Activated T-helper 1 cell treated with anti-CD3 and anti-CD28 coated beads, Interleukin-12 subunit alpha, Interleukin-12 subunit beta, Interleukin-2, Interleukin-4 antibody, amounts not matched to agents 30 ng/mL and 10 ng/mL and 1 ng/mL, durations not matched to agents 14 hours and 24 hours and 36 hours (primary cell): ENCODE measurements at regions of chr3 and their contacts with region 1.

Region 1: DNA sequence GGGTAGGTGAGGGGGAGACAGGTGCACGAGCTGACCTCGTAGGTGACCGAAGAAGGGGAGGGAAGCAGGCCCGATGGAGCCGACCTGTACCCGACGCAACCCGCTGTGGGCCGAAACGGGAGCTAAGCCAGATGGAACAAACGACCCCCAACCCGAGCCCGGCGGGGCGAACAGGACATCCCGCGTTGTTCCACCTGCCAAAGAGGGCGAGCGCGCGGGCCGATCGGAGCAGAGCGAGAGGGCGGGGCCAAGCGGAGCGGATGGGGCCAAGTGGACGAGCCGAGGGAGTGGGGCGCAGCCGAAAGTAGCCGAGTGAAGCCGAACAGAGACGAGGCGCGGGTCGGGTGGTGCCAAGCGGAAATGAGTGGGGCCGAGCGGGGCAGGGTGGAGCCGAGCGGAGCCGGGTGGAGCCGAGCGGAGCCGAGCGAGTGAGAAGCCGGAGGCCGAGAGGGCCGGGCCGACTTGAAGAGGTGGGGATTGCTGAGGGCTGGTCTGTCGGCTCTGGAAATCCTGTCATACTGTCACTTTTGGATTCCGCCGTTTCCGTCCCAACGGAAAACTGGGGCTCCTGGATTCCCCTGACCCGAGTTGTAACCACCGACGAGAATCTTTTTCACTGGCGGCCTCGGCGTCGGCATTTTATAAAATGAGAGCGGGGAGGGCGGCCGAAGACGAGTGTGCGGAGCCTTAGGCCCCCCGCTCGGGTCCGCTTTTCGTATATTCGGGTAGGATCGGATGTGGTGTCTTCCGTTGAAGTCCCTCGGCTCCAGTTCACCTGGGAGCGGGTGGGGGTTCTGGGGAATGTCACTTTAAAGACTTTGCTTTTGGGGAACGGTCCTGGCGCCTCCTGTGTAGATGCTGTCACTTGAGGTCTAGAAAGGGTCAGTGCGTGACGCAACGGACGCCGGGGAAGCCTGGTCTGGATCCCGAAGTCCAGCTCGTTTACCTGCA is 15.6 kb upstream of the WNT7A start:
- DNase-seq: peak; percentile 95
- H3K4me3 Mint-ChIP-seq: peak overlapping the region; percentile 89
- H3K27ac Mint-ChIP-seq: peak overlapping the region; percentile 79
- H3K4me1 Mint-ChIP-seq: peaks cover 22% of the 10 kb centered on the region
- H3K27me3 Mint-ChIP-seq: peaks cover 3% of the 10 kb centered on the region

Region 2: DNA sequence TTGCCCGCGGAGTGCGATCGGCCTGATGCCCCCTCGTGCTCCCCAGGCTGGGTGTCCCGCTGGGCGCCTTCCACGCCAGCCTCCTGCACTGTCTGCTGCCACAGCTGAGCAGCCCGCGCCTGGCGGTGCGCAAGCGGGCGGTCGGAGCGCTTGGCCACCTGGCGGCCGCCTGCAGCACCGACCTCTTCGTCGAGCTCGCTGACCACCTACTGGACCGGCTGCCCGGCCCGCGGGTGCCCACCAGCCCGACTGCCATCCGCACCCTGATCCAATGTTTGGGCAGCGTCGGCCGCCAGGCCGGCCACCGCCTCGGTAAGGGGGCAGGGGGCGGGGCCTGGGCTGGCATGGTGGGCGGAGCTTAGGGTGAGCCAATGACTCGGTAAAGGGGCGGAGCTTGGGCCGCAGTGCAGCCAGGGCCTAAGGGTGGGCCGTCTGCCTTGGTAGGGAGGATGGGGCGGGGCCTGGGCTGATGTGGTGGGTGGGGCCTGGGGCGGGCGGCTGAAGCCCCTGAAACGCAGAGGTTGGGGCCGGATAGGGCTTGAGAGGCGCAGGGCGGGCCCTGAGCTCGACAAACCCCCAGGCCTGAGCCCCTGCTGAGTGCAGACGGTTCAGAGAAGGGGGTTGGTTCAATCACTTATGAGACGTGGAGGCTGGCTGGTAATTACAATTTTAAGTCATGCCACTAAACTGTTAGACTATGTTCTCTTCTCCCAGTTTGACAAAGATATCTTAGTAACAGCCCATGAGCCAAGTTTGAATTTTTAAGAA is 1085.2 kb before region 1 on chr3:
- intact Hi-C with region 1: loop called (anchors 10 kb)
- DNase-seq: peak; percentile 86
- H3K4me3 Mint-ChIP-seq: peak overlapping the region; percentile 26
- H3K27ac Mint-ChIP-seq: no peak overlapping the region
- H3K4me1 Mint-ChIP-seq: peaks cover 5% of the 10 kb centered on the region
- H3K27me3 Mint-ChIP-seq: peaks cover 6% of the 10 kb centered on the region

Region 3: DNA sequence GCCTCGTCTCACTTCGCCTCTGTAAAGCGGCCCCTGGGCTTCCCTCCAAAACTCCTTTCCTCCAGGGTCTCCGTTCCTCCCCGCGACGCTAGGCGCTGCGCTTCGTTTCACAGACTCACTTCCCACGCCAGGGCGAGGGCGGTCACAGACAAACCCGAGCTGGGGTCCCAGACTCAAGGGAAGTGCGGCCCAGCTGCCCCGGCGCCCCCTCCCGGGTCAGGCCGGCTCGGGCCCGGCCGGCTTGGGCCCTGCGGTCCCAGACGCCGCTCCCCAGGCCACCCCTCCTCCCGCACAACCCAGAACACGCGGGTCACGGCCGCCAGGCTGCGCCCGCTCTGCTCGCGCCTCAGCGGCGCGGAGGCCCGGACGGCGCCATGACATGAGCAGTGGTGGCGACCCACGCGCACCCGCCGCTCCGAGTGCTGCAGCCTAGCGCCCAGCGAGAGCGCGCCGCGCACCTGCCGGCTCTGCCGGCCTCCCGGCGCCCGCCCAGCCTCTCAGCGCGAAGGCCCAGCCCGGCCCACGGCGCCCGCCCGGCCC is 475.9 kb before region 1 on chr3:
- intact Hi-C with region 1: loop called (anchors 10 kb)
- DNase-seq: peak; percentile 56
- H3K4me3 Mint-ChIP-seq: peak overlapping the region; percentile 88
- H3K27ac Mint-ChIP-seq: peak overlapping the region; percentile 92
- H3K4me1 Mint-ChIP-seq: peaks cover 71% of the 10 kb centered on the region
- H3K27me3 Mint-ChIP-seq: no peaks in the 10 kb centered on the region

Region 4: DNA sequence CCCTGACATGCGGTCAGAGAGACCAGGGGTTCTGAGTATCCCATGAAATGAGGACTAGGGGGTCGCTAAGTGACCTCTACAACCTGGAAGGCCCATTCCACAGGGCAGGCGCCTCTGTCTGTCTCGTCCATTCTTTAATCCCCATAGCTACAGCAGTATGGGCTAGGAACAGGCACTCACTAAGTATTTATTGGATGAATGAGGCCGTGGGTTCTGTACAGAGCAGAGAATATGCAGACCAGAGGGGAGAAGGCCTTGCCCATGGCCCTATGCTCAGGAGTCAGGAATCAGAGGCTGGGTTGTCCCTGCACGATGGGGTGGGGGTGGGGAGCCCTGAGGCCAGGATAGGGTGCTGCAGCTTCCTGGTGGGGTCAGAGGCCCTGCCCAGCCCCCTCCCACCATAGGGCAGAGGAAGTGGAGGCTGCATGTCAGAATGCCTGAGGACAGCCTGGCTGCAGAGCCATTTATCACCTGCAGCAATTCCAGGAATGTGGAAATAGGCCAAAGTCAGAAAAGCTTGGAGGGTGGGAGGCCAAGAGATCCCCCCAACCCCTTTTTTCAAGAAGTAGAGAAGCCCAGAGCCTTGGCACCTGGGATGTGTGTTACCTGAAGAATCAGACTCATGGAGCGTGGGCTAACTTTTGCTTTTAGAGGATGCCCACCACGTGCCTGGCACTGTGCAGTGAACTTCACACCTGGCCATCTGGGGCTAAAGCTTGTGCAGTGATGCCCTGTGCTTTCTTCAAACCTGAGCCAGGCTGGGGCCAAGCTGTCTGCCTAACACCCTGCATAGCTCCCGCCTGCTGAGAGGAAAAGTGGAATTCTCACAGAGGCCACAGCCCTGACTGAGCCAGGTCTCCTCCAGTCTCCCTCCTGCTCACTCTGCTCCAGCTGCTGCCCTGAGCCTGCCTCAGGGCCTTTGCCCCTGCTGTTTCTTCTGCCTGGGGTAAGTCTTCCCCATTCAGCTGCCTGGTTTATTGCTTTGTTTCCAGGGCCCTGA is 125.0 kb before region 1 on chr3:
- intact Hi-C with region 1: no loop called
- DNase-seq: no peak
- H3K4me3 Mint-ChIP-seq: no peak overlapping the region
- H3K27ac Mint-ChIP-seq: no peak overlapping the region
- H3K4me1 Mint-ChIP-seq: peaks cover 6% of the 10 kb centered on the region
- H3K27me3 Mint-ChIP-seq: peaks cover 2% of the 10 kb centered on the region

Region 5: GRCh38 chr3:14124615-14125190 is 229.3 kb after region 1 on chr3 and contains the starts of genes CHCHD4 and TMEM43:
- intact Hi-C with region 1: loop called (anchors 1 kb)
- DNase-seq: peak; percentile 98
- H3K4me3 Mint-ChIP-seq: peak within 1 kb of the TSS; percentile 93
- H3K27ac Mint-ChIP-seq: peak within 1 kb of the TSS; percentile 96
- H3K4me1 Mint-ChIP-seq: peaks cover 67% of the 10 kb centered on the region
- H3K27me3 Mint-ChIP-seq: no peaks in the 10 kb centered on the region
- total RNA-seq, gene CHCHD4: 27.8 and 29.4 TPM in 2 replicates
- total RNA-seq, gene TMEM43: 40.4 and 41.3 TPM in 2 replicates

Region 6: GRCh38 chr3:14261229-14261628 is 365.8 kb after region 1 on chr3:
- intact Hi-C with region 1: loop called (anchors 1 kb)
- DNase-seq: peak; percentile 56
- H3K4me3 Mint-ChIP-seq: no peak overlapping the region
- H3K27ac Mint-ChIP-seq: no peak overlapping the region
- H3K4me1 Mint-ChIP-seq: no peaks in the 10 kb centered on the region
- H3K27me3 Mint-ChIP-seq: peaks cover 11% of the 10 kb centered on the region

Region 7: DNA sequence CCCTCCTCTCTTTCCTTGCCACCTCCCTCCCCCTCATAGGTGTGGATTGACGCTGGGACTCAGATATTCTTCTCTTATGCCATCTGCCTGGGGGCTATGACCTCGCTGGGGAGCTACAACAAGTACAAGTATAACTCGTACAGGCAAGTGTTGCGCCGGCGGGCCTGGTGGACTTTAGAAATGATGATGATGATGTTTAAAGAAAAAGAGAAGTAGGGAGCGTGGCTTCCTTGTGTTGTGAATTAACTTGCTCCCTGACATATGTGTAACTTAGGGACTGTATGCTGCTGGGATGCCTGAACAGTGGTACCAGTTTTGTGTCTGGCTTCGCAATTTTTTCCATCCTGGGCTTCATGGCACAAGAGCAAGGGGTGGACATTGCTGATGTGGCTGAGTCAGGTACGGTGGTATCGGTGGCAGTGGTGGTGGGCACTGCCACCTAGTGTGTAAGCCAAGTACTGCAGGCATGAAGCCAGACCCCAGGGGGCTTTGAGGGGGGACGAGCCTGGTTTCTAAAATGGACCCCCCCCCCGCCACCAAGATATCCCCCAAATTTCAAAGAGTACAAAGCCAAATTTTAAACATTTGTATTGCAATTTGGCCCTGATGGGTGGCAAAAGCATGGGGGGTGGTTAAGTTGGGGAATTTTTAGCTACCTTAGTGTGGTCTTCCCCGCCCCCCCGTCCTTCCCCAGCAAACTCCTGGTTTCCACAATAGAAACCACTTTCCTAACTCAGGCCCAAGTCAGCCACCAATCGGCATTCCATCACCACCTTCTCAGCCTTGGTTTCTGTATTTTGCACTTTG is 572.6 kb after region 1 on chr3:
- intact Hi-C with region 1: loop called (anchors 2 kb)
- DNase-seq: peak; percentile 23
- H3K4me3 Mint-ChIP-seq: no peak overlapping the region
- H3K27ac Mint-ChIP-seq: peak overlapping the region; percentile 63
- H3K4me1 Mint-ChIP-seq: peaks cover under 1% of the 10 kb centered on the region
- H3K27me3 Mint-ChIP-seq: no peaks in the 10 kb centered on the region

Region 8: DNA sequence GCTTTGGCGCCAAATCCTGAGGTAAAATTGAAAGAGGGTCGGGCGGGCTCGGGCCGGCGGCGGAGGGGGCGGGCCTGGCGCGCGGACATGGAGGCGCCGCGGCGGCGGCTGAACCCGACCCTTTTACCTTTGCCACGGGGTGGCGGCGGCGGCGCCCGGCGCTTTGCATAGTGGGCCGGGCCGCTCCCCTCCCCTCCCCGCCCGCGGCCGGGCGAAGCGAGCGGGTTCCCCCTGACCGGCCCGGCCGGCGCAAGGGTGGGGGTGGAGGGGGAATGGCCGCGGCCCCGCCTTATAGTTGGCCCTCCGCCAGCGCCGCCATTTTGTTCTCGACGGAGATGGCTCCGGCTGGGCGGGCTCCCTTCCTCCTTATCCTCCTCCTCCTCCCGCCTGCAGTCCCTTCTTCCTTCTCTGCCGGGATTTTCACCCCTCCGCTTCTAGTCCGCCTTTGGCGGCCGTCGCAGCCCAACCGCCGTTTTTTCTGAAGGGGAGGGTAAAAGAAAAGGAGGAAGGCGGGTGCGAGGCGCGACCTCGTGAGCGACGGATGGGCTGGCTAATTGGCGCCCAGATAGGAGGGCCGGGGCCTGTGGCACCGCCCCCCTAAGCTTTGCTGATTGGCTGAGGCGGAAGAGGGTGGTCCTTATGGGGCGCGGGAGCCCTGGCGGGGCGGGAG is 1052.6 kb after region 1 on chr3:
- intact Hi-C with region 1: loop called (anchors 2 kb)
- DNase-seq: peak; percentile 95
- H3K4me3 Mint-ChIP-seq: peak overlapping the region; percentile 97
- H3K27ac Mint-ChIP-seq: peak overlapping the region; percentile 100
- H3K4me1 Mint-ChIP-seq: peaks cover 36% of the 10 kb centered on the region
- H3K27me3 Mint-ChIP-seq: no peaks in the 10 kb centered on the region